Left lung (tissue), 14 donors: ENCODE measurements at regions of chr4 and their contacts with region 1.

Region 1: GRCh38 chr4:105469736-105470135 is 4.1 kb downstream of the PPA2 start:
- DNase-seq: no peak
- ATAC-seq: no peak
- H3K4me3 ChIP-seq: no peak overlapping the region
- H3K27ac ChIP-seq: peak overlapping the region in 1 of 2 donors; percentile 68
- H3K4me1 ChIP-seq: peaks cover 13 to 48% of the 10 kb centered on the region in 2 donors
- H3K27me3 ChIP-seq: no peaks in the 10 kb centered on the region
- CTCF ChIP-seq: no peak

Region 2: DNA sequence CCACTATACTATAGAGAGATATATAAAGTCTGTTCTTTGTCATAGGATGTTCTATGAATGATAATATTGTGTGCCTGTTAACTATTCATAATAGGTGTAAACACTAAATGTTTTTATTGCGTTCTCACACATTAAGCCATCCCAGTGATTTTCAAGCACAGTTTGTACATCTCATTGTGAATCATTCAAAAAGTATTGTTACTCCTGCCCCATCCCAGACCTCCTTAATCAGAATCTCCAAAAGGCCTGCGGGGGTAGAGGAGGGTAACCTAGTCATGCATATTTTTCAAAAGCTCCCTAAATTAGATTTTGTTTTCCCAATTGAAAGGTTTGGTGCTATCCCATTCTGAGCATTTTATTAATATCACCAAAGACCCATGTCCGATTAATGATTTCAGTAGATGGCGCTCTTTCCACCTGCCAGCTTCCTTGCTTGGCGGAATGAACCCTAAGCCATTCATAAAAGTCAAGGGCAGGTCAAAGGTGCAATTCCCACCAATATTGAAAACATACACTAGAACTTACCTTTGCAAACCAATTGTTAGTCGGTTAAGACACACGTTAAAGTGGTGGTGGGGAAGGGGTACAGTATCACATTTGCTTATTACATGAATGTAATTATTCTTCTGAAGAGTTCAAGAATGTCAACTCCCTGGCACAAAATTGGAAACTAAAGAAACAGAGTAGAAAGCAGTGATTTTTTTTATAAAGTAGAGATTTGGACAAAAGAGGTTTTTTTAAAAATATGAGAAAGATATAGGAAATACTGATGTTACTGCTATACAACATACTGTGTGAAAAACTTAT is 328.8 kb before region 1 on chr4:
- intact Hi-C with region 1: loop called in 1 of 2 experiments (anchors 5 kb)
- DNase-seq: no peak
- ATAC-seq: peak; percentile 52
- H3K4me3 ChIP-seq: no peak overlapping the region
- H3K27ac ChIP-seq: no peak overlapping the region
- H3K4me1 ChIP-seq: peaks cover 0 to 54% of the 10 kb centered on the region in 2 donors
- H3K27me3 ChIP-seq: no peaks in the 10 kb centered on the region
- CTCF ChIP-seq: peak in 1 of 2 donors; percentile 47